Ascending aorta (tissue), 2 donors: ENCODE measurements at regions of chr7 and their contacts with region 1.

Region 1: DNA sequence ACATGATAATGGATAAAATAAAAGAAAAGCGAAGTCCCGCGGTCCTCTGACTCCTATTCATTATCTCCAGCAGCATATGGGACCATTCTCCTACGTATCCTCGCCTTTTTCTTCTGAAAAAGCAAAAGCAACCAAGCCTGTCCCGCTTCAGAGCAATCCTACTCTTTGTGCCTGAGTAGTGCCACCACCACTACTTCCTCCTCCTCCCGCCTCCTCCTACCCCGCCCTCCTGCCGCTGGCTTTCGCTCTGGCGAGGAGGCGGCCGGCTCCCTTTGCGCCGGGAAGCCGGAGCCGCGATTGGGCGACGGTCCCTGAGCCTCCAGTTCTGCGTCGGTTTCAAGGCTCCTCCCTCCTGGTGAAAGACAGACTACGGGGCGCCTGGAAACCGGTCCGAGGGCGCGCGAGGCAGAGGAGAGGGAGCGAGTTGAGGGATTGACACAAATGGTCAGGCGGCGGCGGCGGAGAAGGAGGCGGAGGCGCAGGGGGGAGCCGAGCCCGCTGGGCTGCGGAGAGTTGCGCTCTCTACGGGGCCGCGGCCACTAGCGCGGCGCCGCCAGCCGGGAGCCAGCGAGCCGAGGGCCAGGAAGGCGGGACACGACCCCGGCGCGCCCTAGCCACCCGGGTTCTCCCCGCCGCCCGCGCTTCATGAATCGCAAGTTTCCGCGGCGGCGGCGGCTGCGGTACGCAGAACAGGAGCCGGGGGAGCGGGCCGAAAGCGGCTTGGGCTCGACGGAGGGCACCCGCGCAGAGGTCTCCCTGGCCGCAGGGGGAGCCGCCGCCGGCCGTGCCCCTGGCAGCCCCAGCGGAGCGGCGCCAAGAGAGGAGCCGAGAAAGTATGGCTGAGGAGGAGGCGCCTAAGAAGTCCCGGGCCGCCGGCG is at the start of gene FZD1:
- DNase-seq: peak; percentile 92 to 98
- H3K4me3 ChIP-seq: peak within 1 kb of the TSS; percentile 65 to 79
- H3K27ac ChIP-seq: peak within 1 kb of the TSS; percentile 88 to 97
- H3K4me1 ChIP-seq: peaks cover 0 to 3% of the 10 kb centered on the region in 2 donors
- H3K27me3 ChIP-seq: no peaks in the 10 kb centered on the region
- CTCF ChIP-seq: peak in 2 of 3 experiments; percentile 10 to 26
- total RNA-seq, gene FZD1: 39.1 TPM

Region 2: DNA sequence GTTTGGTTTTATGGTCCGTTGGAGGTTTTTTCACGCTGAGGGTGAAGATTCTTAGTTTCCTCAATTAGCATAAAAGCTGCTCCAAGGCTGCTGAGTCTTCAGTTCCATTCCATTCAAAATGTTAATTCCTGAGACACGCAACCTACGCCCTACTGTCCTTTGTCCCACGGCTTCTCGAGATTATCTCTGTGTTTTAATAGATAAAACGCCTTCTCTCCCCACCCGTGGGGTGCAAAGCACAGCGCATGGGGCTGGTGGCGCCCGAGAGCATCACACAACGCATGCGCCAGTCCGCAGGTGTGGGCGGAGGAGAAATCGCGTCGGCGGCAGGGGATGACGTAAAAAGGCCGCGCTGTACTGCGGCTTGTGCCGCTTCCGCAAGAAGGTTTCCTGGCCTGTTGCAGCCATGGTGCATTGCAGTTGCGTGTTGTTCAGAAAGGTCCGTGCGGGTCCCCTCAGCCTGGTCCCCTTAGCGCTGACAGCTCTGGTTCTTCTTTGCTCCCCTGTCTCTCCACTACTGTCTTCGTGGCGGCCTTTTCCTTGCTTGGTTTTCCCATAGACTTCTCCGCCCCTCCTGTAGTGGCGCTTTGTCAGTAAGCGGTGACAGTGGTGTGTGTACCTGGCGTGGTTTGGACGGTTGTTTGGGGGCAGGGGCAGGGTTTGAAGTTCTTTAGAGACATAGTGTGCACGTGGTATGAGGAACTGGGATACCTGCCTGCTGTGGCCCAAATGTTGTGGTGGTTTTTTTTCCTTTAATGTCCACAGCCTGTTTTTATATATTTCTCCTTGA is 917.8 kb before region 1 on chr7 and contains the start of gene GTPBP10:
- intact Hi-C with region 1: loop called (anchors 2 kb)
- DNase-seq: peak; percentile 60 to 95
- H3K4me3 ChIP-seq: peak within 1 kb of the TSS; percentile 69 to 74
- H3K27ac ChIP-seq: peak within 1 kb of the TSS; percentile 70 to 86
- H3K4me1 ChIP-seq: peaks cover 3 to 8% of the 10 kb centered on the region in 2 donors
- H3K27me3 ChIP-seq: no peaks in the 10 kb centered on the region
- CTCF ChIP-seq: peak; percentile 58 to 84 (median 80)
- total RNA-seq, gene GTPBP10: 4.5 TPM

Region 3: DNA sequence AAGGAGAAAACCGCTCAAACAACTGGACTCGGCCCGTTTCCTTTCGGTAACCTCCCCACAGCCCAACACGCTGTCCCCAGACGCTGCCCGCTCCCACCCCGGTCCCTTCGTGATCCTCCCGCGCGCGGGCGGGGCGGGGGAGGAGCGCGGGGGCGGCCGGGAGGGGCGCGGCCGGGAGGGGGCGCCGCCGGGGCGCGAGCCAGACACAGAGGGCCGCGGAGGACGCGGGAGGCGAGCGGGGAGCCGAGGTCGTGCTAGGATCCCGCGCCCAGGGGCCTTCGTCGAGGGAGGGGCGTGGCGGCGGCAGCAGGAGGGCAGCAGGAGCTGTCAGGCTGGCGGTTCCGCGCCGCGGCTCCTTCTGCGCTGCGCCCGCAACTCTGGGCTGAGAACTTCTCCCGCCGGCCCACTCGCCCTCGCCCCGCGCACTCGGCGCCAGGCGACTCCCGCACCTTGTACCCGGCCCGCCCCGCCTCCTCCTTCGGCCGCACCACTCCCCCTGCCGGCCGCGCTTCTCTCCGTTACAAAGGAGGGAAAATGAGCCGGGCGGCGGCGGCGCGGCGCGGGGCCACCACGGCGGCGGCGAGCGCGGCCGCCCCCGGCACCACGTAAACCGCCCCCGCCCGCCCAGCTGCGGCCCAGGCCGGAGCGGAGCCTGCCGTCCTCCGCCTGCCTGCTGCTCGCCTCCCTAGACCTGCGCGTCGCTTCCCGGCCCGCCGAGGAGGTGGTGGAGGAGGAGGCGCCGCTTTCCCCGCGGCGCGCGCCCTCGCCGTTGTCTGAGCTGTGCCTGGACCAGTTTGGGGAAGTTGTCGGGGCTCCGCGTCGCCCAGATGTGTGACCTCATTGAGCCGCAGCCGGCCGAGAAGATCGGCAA is 668.2 kb before region 1 on chr7 and contains the start of gene CDK14:
- intact Hi-C with region 1: loop called (anchors 5 kb)
- DNase-seq: peak; percentile 39 to 88
- H3K4me3 ChIP-seq: peak within 1 kb of the TSS; percentile 78 to 93
- H3K27ac ChIP-seq: peak within 1 kb of the TSS; percentile 83 to 84
- H3K4me1 ChIP-seq: peaks cover 0 to 3% of the 10 kb centered on the region in 2 donors
- H3K27me3 ChIP-seq: no peaks in the 10 kb centered on the region
- CTCF ChIP-seq: peak; percentile 31 to 57 (median 45)
- total RNA-seq, gene CDK14: 5.1 TPM

Region 4: GRCh38 chr7:90945104-90945787 is 319.0 kb before region 1 on chr7:
- intact Hi-C with region 1: loop called (anchors 10 kb)
- DNase-seq: no peak
- H3K4me3 ChIP-seq: no peak overlapping the region
- H3K27ac ChIP-seq: peak overlapping the region; percentile 59 to 63
- H3K4me1 ChIP-seq: peaks cover 0 to 12% of the 10 kb centered on the region in 2 donors
- H3K27me3 ChIP-seq: no peaks in the 10 kb centered on the region
- CTCF ChIP-seq: no peak

Region 5: DNA sequence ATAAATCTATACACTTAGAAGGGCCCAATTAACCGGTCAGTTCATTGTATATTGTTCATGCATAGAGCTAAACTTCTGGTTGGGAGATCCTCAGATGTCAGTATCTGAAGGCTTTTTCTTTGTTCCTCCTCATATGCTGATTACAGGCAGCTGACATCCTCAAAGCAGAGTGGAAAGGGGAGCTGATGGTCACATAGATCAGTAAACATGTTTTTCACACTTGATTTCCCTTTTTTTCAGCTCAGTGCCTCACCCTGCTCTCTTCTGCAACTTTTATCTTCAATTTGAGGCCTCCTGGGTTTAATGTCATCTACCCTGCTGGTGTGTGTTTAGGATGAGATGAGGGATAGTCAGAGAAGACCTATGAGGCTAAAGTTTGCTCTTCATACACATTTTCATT is 297.9 kb before region 1 on chr7:
- intact Hi-C with region 1: no loop called
- DNase-seq: no peak
- H3K4me3 ChIP-seq: no peak overlapping the region
- H3K27ac ChIP-seq: no peak overlapping the region
- H3K4me1 ChIP-seq: no peaks in the 10 kb centered on the region
- H3K27me3 ChIP-seq: no peaks in the 10 kb centered on the region
- CTCF ChIP-seq: no peak

Region 6: DNA sequence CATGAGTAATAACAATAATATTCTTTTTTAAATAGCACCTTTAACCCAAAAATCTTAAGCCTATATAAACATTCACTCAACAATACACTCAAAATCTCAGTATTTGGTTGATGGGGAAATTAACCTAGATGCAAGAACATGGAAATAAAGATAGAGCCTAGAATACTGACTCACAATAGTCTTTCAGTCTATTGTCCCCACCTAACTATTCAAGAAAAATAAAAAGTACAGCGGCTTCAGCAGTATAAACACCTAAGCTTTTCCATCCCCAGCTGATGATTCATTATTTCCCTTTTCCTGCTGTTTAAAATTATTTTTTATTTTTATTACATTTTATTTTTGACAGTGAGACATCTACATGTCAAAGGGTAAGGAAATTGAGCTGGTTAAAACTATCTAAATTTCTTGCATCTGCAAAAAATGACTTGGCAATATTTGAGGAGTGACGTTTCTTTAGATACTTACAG is 201.3 kb after region 1 on chr7:
- intact Hi-C with region 1: loop called (anchors 1 kb)
- DNase-seq: no peak
- H3K4me3 ChIP-seq: no peak overlapping the region
- H3K27ac ChIP-seq: peak overlapping the region; percentile 43 to 65
- H3K4me1 ChIP-seq: peaks cover 0 to 18% of the 10 kb centered on the region in 2 donors
- H3K27me3 ChIP-seq: no peaks in the 10 kb centered on the region
- CTCF ChIP-seq: no peak

Region 7: DNA sequence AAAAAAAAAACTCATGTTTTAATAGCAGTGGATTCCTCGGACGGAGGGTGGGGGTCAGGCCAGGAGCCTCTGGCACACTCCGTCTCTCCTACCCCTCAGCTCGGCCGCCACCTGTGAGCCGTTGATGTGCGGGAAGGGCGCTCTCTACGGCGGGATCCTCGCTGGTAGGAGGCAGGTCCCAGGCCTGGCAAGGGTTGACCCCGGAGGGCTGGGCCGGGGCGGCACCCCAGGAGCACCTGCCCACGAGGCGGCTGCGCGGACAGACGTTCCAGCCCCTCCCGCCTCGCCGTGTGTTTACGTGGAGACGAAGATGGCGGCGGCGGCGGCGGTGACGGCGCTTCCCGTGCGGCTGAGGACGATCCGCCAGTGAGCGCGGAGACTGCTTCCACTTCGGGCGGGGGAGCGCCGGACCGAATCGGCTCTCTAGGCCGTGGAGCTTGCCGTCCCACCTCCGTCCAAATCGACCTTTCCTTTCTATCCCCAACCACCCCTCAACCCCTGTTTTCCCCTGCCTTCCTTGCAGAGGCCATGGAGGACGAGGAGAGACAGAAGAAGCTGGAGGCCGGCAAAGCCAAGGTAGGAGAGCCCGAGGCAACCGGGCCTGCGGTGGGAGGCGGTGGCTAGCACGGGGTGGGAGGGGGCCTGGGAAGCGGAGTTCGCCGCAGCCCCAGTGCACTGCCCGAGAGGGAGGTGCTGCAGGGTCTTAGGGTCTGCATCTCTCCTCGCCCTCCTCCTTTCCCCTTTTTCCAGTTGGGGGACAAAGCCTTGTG is 676.5 kb after region 1 on chr7 and contains the start of gene AKAP9:
- intact Hi-C with region 1: loop called (anchors 10 kb)
- DNase-seq: peak; percentile 60 to 93
- H3K4me3 ChIP-seq: peak within 1 kb of the TSS; percentile 61 to 81
- H3K27ac ChIP-seq: peak within 1 kb of the TSS; percentile 89 to 94
- H3K4me1 ChIP-seq: peaks cover 0 to 7% of the 10 kb centered on the region in 2 donors
- H3K27me3 ChIP-seq: no peaks in the 10 kb centered on the region
- CTCF ChIP-seq: no peak
- total RNA-seq, gene AKAP9: 14.4 TPM

Region 8: GRCh38 chr7:92178927-92179924 is 914.9 kb after region 1 on chr7 and contains the start of gene LRRD1:
- intact Hi-C with region 1: no loop called
- DNase-seq: peak; percentile 46 to 92
- H3K4me3 ChIP-seq: peak within 1 kb of the TSS; percentile 55 to 68
- H3K27ac ChIP-seq: peak within 1 kb of the TSS; percentile 72 to 73
- H3K4me1 ChIP-seq: peaks cover 0 to 4% of the 10 kb centered on the region in 2 donors
- H3K27me3 ChIP-seq: no peaks in the 10 kb centered on the region
- CTCF ChIP-seq: peak; percentile 80 to 98 (median 96)
- total RNA-seq, gene LRRD1: not detected